HCT116 (cell line): ENCODE measurements at regions of chr17 and their contacts with region 1.

Region 1: DNA sequence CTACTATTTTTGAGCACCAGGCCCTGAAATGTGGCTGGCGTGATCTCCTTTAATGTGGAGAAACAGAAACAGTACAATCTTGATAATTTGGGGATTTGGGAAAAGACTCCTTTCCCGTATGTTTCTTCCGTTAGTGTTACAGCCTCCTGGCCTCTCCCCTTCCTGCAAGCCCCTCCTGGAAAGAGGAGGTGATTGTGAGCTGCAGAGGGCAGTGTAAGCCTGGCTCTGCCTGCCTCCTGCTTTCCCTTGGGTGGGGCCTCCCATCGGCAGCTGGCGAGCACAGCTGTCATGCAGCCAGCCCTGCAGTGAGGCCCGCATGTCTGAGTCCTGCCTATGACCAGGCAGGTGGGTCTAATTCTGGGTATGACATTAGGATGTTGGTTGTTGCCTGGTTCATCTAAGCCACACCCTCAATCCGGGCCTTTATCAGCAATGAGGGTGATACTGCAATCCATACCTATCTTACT is 48.7 kb upstream of the WSB1 start:
- DNase-seq: peak; percentile 69
- ATAC-seq: peak; percentile 99
- H3K4me3 ChIP-seq: 0 out of 4 replicates have a peak overlapping the region, but pooled peaks of 1 of the 2 experiments have one; percentile 1
- H3K27ac ChIP-seq: no peak overlapping the region
- H3K4me1 ChIP-seq: peaks cover 22 to 39% of the 10 kb centered on the region in 2 experiments
- H3K27me3 ChIP-seq: no peaks in the 10 kb centered on the region
- CTCF ChIP-seq: peak; percentile 60 to 92 (median 73)
- POLR2A ChIP-seq: no peak
- RAD21 ChIP-seq: peak; percentile 98

Region 2: GRCh38 chr17:27226615-27227230 is 18.5 kb before region 1 on chr17:
- CTCF ChIA-PET with region 1: no interaction called
- POLR2A ChIA-PET with region 1: no interaction called
- RAD21 ChIA-PET with region 1: no interaction called
- intact Hi-C with region 1: no loop called
- DNase-seq: no peak
- ATAC-seq: peak; percentile 79
- H3K4me3 ChIP-seq: no peak overlapping the region
- H3K27ac ChIP-seq: no peak overlapping the region
- H3K4me1 ChIP-seq: peaks cover 0 to 11% of the 10 kb centered on the region in 2 experiments; a peak in 2 of 4 replicates
- H3K27me3 ChIP-seq: no peaks in the 10 kb centered on the region
- CTCF ChIP-seq: no peak
- POLR2A ChIP-seq: no peak
- RAD21 ChIP-seq: no peak

Region 3: GRCh38 chr17:27256225-27257030 is 11.2 kb after region 1 on chr17:
- CTCF ChIA-PET with region 1: no interaction called
- POLR2A ChIA-PET with region 1: no interaction called
- RAD21 ChIA-PET with region 1: no interaction called
- intact Hi-C with region 1: no loop called
- DNase-seq: no peak
- ATAC-seq: no peak
- H3K4me3 ChIP-seq: no peak overlapping the region
- H3K27ac ChIP-seq: no peak overlapping the region
- H3K4me1 ChIP-seq: no peaks in the 10 kb centered on the region
- H3K27me3 ChIP-seq: no peaks in the 10 kb centered on the region
- CTCF ChIP-seq: no peak
- POLR2A ChIP-seq: no peak
- RAD21 ChIP-seq: no peak

Region 4: GRCh38 chr17:27332485-27333409 is 87.5 kb after region 1 on chr17:
- CTCF ChIA-PET with region 1: interaction called, 17 read pairs
- POLR2A ChIA-PET with region 1: interaction called, 3 read pairs
- RAD21 ChIA-PET with region 1: interaction called, 6 to 10 read pairs
- intact Hi-C with region 1: loop called (anchors 1 kb)
- DNase-seq: peak; percentile 97
- ATAC-seq: peak; percentile 90
- H3K4me3 ChIP-seq: peak overlapping the region; percentile 43 to 57
- H3K27ac ChIP-seq: peak overlapping the region; percentile 92
- H3K4me1 ChIP-seq: peaks cover 31 to 35% of the 10 kb centered on the region in 2 experiments
- H3K27me3 ChIP-seq: no peaks in the 10 kb centered on the region
- CTCF ChIP-seq: peak; percentile 70 to 85 (median 73)
- POLR2A ChIP-seq: peak; percentile 2
- RAD21 ChIP-seq: peak; percentile 95

Region 5: GRCh38 chr17:28494445-28495188 is 1249.4 kb after region 1 on chr17:
- CTCF ChIA-PET with region 1: no interaction called
- POLR2A ChIA-PET with region 1: no interaction called
- RAD21 ChIA-PET with region 1: no interaction called
- intact Hi-C with region 1: no loop called
- DNase-seq: peak; percentile 27
- ATAC-seq: peak; percentile 94
- H3K4me3 ChIP-seq: no peak overlapping the region
- H3K27ac ChIP-seq: no peak overlapping the region
- H3K4me1 ChIP-seq: no peaks in the 10 kb centered on the region; a peak in 1 of 4 replicates
- H3K27me3 ChIP-seq: no peaks in the 10 kb centered on the region
- CTCF ChIP-seq: peak; percentile 91 to 93 (median 93)
- POLR2A ChIP-seq: no peak
- RAD21 ChIP-seq: peak; percentile 94